GM12878 (cell line): ENCODE measurements at regions of chr21 and their contacts with region 1.

Region 1: GRCh38 chr21:43916691-43917514 is 51.9 kb downstream of the AGPAT3 start:
- DNase-seq: peak; percentile 71
- ATAC-seq: peak; percentile 64
- H3K4me3 ChIP-seq: peak overlapping the region; percentile 73
- H3K27ac ChIP-seq: peak overlapping the region; percentile 88
- H3K4me1 ChIP-seq: peaks cover 20% of the 10 kb centered on the region
- H3K27me3 ChIP-seq: no peaks in the 10 kb centered on the region
- CTCF ChIP-seq: no peak
- EP300 ChIP-seq: no peak
- POLR2A ChIP-seq: peak; percentile 74
- RAD21 ChIP-seq: no peak

Region 2: GRCh38 chr21:43810505-43811261 is 106.2 kb before region 1 on chr21:
- CTCF ChIA-PET with region 1: interaction called, 6 read pairs
- POLR2A ChIA-PET with region 1: interaction called, 9 read pairs
- RAD21 ChIA-PET with region 1: interaction called, 11 read pairs
- SMC1A ChIA-PET with region 1: interaction called, 6 read pairs
- in situ Hi-C with region 1: loop called (anchors 5 kb)
- intact Hi-C with region 1: loop called (anchors 1 kb)
- DNase-seq: peak; percentile 51
- ATAC-seq: peak; percentile 91
- H3K4me3 ChIP-seq: no peak overlapping the region
- H3K27ac ChIP-seq: peak overlapping the region; percentile 50
- H3K4me1 ChIP-seq: peaks cover 44% of the 10 kb centered on the region
- H3K27me3 ChIP-seq: no peaks in the 10 kb centered on the region
- CTCF ChIP-seq: peak; percentile 98 to 99 (median 99)
- EP300 ChIP-seq: no peak
- POLR2A ChIP-seq: no peak
- RAD21 ChIP-seq: peak; percentile 99

Region 3: GRCh38 chr21:43884012-43884860 is 32.7 kb before region 1 on chr21:
- CTCF ChIA-PET with region 1: no interaction called
- POLR2A ChIA-PET with region 1: interaction called, 4 read pairs
- RAD21 ChIA-PET with region 1: interaction called, 12 read pairs
- SMC1A ChIA-PET with region 1: interaction called, 3 read pairs
- in situ Hi-C with region 1: no loop called
- intact Hi-C with region 1: no loop called
- DNase-seq: no peak
- ATAC-seq: peak; percentile 92
- H3K4me3 ChIP-seq: peak overlapping the region; percentile 31; the same call in 1 of the 2 replicates
- H3K27ac ChIP-seq: 0 out of 2 replicates have a peak overlapping the region, but pooled peaks have one; percentile 55
- H3K4me1 ChIP-seq: peaks cover 24% of the 10 kb centered on the region
- H3K27me3 ChIP-seq: no peaks in the 10 kb centered on the region
- CTCF ChIP-seq: no peak
- EP300 ChIP-seq: no peak
- POLR2A ChIP-seq: no peak
- RAD21 ChIP-seq: no peak

Region 4: GRCh38 chr21:43956670-43957035 is 39.8 kb after region 1 on chr21:
- CTCF ChIA-PET with region 1: no interaction called
- POLR2A ChIA-PET with region 1: interaction called, 4 read pairs
- RAD21 ChIA-PET with region 1: interaction called, 3 read pairs
- SMC1A ChIA-PET with region 1: no interaction called
- in situ Hi-C with region 1: no loop called
- intact Hi-C with region 1: loop called (anchors 1 kb)
- DNase-seq: no peak
- ATAC-seq: no peak
- H3K4me3 ChIP-seq: no peak overlapping the region
- H3K27ac ChIP-seq: peak overlapping the region; percentile 41
- H3K4me1 ChIP-seq: peaks cover 32% of the 10 kb centered on the region
- H3K27me3 ChIP-seq: no peaks in the 10 kb centered on the region
- CTCF ChIP-seq: no peak
- EP300 ChIP-seq: no peak
- POLR2A ChIP-seq: no peak
- RAD21 ChIP-seq: no peak

Region 5: GRCh38 chr21:44686000-44686781 is 769.3 kb after region 1 on chr21:
- CTCF ChIA-PET with region 1: no interaction called
- POLR2A ChIA-PET with region 1: no interaction called
- RAD21 ChIA-PET with region 1: no interaction called
- SMC1A ChIA-PET with region 1: no interaction called
- in situ Hi-C with region 1: no loop called
- intact Hi-C with region 1: no loop called
- DNase-seq: no peak
- ATAC-seq: no peak
- H3K4me3 ChIP-seq: no peak overlapping the region
- H3K27ac ChIP-seq: no peak overlapping the region
- H3K4me1 ChIP-seq: no peaks in the 10 kb centered on the region; the same call in 1 of the 2 replicates
- H3K27me3 ChIP-seq: peaks cover 0 to 1% of the 10 kb centered on the region in 2 experiments; a peak in 2 of 4 replicates
- CTCF ChIP-seq: no peak
- EP300 ChIP-seq: no peak
- POLR2A ChIP-seq: no peak
- RAD21 ChIP-seq: no peak